CD8-positive, alpha-beta T cell (primary cell): ENCODE measurements at regions of chr13 and their contacts with region 1.

Region 1: GRCh38 chr13:30114571-30115256 is 192.6 kb downstream of the KATNAL1 start:
- DNase-seq: peak; percentile 90 to 97 (median 94)
- ATAC-seq: peak; percentile 92
- H3K4me3 ChIP-seq: peak overlapping the region; percentile 45 to 61
- H3K4me3 Mint-ChIP-seq: peak overlapping the region; percentile 85
- H3K27ac ChIP-seq: no peak overlapping the region
- H3K27ac Mint-ChIP-seq: peak overlapping the region; percentile 92
- H3K4me1 ChIP-seq: peaks cover 15% of the 10 kb centered on the region
- H3K4me1 Mint-ChIP-seq: peaks cover 30% of the 10 kb centered on the region
- H3K27me3 ChIP-seq: no peaks in the 10 kb centered on the region
- H3K27me3 Mint-ChIP-seq: no peaks in the 10 kb centered on the region
- CTCF ChIP-seq: peak; percentile 91

Region 2: DNA sequence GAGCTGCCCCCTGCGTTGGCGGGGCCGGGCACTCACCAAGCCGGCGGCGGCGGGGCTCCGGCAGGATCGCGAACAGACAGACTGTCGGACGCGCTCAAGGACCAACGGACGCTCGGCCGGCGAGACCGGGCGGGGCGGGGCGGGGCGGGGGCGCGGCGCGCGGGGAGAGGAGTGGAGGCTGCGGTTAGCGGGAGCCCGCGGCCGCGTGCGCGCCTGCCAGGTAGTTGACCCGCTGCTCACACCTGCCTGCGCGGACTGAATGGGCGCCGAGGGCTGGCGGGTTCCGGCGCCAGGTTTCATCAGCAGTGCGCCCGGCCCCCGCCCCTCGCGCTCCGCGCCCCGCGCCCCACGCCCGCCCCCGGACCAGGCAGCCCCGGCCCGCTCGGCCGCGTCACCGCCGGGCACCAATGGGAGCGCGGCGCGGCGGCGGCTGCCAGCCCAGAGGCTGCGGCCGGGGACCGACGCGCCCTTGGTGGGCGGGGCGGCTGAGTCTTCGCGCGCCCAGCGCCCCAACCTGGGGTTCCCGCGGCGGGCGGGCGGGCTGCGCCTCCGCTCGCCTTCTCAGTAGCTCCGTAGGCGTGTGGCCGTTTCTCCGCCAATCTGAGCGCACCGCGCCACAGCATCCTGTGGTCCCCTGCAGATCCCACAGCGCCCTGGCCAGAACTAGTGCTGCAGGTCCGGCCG is 519.2 kb before region 1 on chr13 and contains the start of gene SLC7A1:
- CTCF ChIA-PET with region 1: interaction called, 4 read pairs
- POLR2A ChIA-PET with region 1: no interaction called
- intact Hi-C with region 1: loop called (anchors 2 to 10 kb)
- DNase-seq: peak; percentile 67 to 93 (median 79)
- ATAC-seq: peak; percentile 88
- H3K4me3 ChIP-seq: peak within 1 kb of the TSS; percentile 61 to 74
- H3K4me3 Mint-ChIP-seq: peak within 1 kb of the TSS; percentile 90
- H3K27ac ChIP-seq: peak within 1 kb of the TSS; percentile 63 to 73
- H3K27ac Mint-ChIP-seq: peak within 1 kb of the TSS; percentile 85
- H3K4me1 ChIP-seq: peaks cover 15% of the 10 kb centered on the region
- H3K4me1 Mint-ChIP-seq: peaks cover 36% of the 10 kb centered on the region
- H3K27me3 ChIP-seq: no peaks in the 10 kb centered on the region
- H3K27me3 Mint-ChIP-seq: no peaks in the 10 kb centered on the region
- CTCF ChIP-seq: no peak
- total RNA-seq, gene SLC7A1: 15.2 to 18.4 TPM

Region 3: DNA sequence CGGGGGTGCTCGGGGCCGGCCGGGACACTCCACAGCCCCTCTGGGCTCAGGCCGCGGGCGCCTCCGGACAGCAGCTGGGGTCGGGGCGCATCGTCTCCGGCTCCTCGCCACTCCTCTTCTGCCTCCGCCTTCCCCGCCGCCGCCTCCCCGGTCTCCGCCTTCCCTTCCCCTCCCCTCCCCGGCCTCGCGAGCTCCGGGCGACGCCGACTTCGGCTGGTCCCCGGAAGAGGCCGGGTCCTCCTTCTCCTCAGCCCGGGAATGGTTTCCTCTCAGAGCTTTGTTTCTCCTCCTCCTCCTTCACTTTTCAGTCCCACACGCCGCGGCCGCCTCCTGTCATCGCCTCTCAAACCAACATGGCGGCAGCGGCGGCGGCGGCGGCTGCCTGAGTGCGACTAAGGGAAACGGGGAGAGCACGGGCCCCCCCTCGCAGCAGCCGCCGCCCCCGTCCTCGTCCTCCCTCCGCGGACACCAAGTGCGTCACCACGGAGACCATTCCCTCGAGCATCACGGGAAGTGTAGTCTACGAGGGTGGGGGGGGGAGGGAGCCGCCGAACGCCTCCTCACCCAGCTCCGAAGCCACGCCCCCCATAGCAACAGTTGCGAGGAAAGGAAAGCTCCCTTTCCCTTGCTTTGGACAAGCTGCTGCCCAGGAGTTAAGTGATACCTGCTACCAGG is 264.4 kb before region 1 on chr13 and contains the start of gene UBL3:
- CTCF ChIA-PET with region 1: interaction called, 134 read pairs
- POLR2A ChIA-PET with region 1: interaction called, 13 read pairs
- intact Hi-C with region 1: loop called (anchors 1 kb)
- DNase-seq: peak; percentile 89 to 97 (median 94)
- ATAC-seq: peak; percentile 89
- H3K4me3 ChIP-seq: peak within 1 kb of the TSS; percentile 84 to 86
- H3K4me3 Mint-ChIP-seq: peak within 1 kb of the TSS; percentile 93
- H3K27ac ChIP-seq: peak within 1 kb of the TSS; percentile 90 to 96
- H3K27ac Mint-ChIP-seq: peak within 1 kb of the TSS; percentile 99
- H3K4me1 ChIP-seq: peaks cover 13% of the 10 kb centered on the region
- H3K4me1 Mint-ChIP-seq: peaks cover 24% of the 10 kb centered on the region
- H3K27me3 ChIP-seq: no peaks in the 10 kb centered on the region
- H3K27me3 Mint-ChIP-seq: no peaks in the 10 kb centered on the region
- CTCF ChIP-seq: no peak
- total RNA-seq, gene UBL3: 40.0 to 43.1 TPM

Region 4: DNA sequence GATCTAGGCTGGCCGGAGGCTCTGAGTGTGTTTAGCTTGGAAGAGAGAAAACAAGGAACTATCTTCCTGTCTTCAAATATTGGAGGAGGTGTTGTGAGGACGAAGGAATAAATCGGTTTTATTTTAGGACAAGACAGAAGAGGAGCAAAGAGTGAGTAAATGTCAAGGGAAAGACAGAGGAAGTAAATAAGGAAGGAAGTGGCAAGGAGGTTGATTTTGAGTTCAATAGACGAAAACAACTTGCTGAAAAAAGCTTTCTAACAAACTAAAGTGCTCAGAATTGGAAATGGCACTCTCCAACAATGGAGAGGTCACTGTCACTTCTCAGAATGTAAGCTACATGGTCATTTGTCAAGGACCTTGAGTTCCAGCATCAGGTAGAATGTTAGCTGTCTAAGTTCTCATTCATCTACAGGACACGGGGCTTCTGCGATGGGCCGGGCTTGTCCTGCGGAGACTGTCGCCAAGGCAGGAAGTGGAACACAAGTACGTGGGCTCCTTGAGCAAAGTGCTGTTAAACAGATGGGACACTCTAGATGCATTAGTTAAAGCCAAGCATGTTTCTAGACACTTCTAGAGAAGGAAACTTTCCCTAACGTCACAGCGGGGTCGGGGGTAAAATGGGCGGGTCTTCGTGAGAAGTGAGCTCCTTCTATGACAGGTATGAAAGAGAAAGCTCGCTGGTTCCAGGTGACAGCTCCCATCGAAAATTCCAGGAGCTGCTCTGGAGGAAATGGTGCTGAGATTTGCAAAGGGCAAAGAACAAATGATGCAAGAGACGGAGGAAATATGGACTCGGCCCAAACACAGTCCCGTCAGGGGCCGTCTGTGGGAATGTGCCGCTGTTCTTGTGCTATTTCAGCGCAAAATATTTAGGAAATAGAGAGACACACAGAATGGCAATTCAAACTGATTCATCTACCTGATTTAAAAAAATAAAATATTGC is 160.4 kb before region 1 on chr13:
- CTCF ChIA-PET with region 1: interaction called, 11 read pairs
- POLR2A ChIA-PET with region 1: no interaction called
- intact Hi-C with region 1: no loop called
- DNase-seq: peak in 8 of 9 experiments; percentile 33 to 81 (median 58)
- ATAC-seq: peak; percentile 58
- H3K4me3 ChIP-seq: peak overlapping the region; percentile 35 to 46
- H3K4me3 Mint-ChIP-seq: peak overlapping the region; percentile 80
- H3K27ac ChIP-seq: peak overlapping the region; percentile 62 to 69
- H3K27ac Mint-ChIP-seq: peak overlapping the region; percentile 91
- H3K4me1 ChIP-seq: peaks cover 43% of the 10 kb centered on the region
- H3K4me1 Mint-ChIP-seq: peaks cover 54% of the 10 kb centered on the region
- H3K27me3 ChIP-seq: no peaks in the 10 kb centered on the region
- H3K27me3 Mint-ChIP-seq: peaks cover 2% of the 10 kb centered on the region
- CTCF ChIP-seq: no peak

Region 5: DNA sequence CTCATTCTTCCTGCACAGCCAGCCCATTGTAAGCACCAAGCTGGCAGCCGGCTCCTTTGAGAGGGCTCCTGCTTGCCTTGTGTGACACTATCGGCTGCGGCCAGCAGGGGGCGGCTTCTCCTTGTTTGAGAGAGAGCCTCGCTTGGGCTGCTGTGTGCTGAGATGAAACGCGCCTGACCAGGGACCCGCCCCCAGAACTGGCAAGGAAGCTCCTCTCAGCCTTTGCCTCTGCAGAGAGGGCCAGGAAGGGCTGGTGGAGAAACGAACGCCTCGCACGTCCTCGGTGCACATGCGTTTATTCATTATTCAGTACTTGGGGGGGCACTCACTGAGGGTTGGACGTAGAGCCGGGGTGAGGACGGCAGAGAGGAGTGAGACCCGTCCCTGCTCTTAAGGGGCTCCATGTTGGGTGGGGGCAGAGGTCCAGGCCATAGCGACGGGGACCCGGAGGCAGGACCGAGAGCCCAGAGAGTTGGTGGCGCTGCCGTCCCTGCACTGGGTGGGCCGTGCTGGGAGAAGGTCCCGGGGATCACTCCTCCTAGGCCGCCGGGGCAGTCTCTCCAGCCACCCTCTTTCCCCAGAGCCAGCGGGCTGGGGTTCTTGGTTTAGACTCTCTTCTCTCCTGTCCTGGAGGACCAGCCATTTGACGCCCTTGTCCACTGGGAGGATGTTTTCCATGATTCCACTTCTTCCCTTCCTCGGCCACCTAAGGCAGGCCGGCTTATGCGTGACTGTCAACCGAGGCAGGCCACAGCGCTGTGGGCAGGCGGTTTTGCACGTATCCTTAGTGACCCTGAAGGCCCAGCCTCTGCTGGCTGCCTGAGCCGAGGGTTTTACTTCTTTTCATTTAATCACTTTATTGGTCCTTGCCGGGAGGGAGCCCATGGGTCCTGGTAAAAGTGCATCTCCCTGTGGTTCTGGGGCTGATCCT is 18.2 kb after region 1 on chr13:
- CTCF ChIA-PET with region 1: interaction called, 82 read pairs
- POLR2A ChIA-PET with region 1: interaction called, 6 read pairs
- intact Hi-C with region 1: no loop called
- DNase-seq: peak; percentile 92 to 100 (median 97)
- ATAC-seq: peak; percentile 100
- H3K4me3 ChIP-seq: no peak overlapping the region
- H3K4me3 Mint-ChIP-seq: peak overlapping the region; percentile 65
- H3K27ac ChIP-seq: no peak overlapping the region
- H3K27ac Mint-ChIP-seq: peak overlapping the region; percentile 77
- H3K4me1 ChIP-seq: peaks cover 9% of the 10 kb centered on the region
- H3K4me1 Mint-ChIP-seq: peaks cover 12% of the 10 kb centered on the region
- H3K27me3 ChIP-seq: no peaks in the 10 kb centered on the region
- H3K27me3 Mint-ChIP-seq: no peaks in the 10 kb centered on the region
- CTCF ChIP-seq: peak; percentile 79

Region 6: DNA sequence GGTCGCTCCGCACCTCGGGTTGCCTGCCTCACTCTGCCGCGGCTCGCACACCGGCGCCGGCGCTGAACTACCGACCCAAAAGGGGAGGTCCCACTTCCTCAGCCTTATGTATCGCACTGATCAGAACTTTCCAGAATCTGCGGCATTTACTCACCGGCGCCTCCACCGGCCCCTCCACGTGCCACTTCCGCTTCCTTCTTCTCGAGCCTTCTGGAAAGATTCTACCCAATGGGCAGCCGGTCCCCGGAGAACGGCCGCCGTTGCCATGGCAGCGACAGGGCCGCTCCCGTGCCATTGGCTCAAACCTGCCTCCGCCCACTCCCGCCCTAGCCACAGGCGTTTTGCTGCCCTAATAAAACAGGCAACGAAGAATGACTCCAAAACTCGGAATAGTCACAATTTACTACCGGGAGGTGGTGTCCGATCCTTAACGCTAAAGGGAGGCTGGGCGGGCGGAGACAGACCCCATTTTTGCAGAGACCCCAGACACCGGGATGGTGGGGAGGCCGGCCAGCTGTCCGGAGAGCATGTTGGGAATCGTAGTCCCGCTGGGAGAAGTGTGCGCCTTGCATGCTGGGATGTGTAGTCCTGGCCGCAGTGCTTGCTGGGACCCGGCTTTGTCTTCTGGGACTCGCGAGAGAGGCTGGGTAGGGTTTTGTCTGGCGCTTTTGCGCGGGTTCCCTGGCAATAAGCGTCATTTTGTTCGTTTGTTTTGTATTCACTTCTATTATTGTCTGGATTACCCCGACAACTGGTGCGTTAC is 1047.3 kb after region 1 on chr13 and contains the start of gene HSPH1:
- CTCF ChIA-PET with region 1: no interaction called
- POLR2A ChIA-PET with region 1: no interaction called
- intact Hi-C with region 1: loop called in 1 of 2 experiments (anchors 2 kb)
- DNase-seq: peak; percentile 96 to 99 (median 98)
- ATAC-seq: peak; percentile 83
- H3K4me3 ChIP-seq: peak within 1 kb of the TSS; percentile 76 to 95
- H3K4me3 Mint-ChIP-seq: peak within 1 kb of the TSS; percentile 95
- H3K27ac ChIP-seq: peak within 1 kb of the TSS; percentile 98
- H3K27ac Mint-ChIP-seq: peak within 1 kb of the TSS; percentile 98
- H3K4me1 ChIP-seq: peaks cover 25% of the 10 kb centered on the region
- H3K4me1 Mint-ChIP-seq: peaks cover 43% of the 10 kb centered on the region
- H3K27me3 ChIP-seq: no peaks in the 10 kb centered on the region
- H3K27me3 Mint-ChIP-seq: no peaks in the 10 kb centered on the region
- CTCF ChIP-seq: no peak
- total RNA-seq, gene HSPH1: 189 to 199 TPM

Region 7: DNA sequence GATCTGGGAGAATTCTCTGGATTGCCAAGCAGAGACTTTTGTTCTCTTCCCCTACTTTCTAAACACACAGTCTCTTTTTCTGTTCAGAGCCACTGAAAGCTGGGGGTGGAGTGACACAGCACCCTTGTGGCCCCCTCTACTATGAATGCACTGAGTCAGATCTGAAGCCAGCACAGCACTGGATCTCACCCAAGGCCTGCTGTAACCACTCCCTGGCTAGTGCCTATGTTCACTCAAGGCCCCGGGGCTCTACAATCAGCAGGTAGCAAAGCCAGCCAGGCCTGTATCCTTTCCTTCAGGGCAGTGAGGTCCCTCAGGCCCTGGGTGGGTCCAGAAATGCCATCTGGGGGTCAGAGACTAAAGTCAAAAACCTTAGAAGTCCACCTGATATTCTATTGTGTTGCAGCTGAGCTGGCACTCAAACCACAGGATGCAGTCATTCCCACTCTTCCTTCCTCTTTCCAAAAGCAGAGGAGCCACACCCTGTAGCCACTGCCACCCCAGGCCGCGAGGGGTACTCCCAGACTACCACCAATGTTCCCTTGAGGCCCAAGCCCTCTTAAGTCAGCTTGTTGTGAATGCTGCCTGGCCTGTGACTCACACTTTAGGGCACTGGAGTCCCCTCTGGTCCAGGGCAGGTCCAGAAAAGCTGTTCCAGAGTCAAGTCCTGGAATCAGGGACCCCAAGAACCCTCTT is 1514.5 kb after region 1 on chr13:
- CTCF ChIA-PET with region 1: no interaction called
- POLR2A ChIA-PET with region 1: no interaction called
- intact Hi-C with region 1: no loop called
- DNase-seq: no peak
- ATAC-seq: no peak
- H3K4me3 ChIP-seq: no peak overlapping the region
- H3K4me3 Mint-ChIP-seq: no peak overlapping the region
- H3K27ac ChIP-seq: no peak overlapping the region
- H3K27ac Mint-ChIP-seq: no peak overlapping the region
- H3K4me1 ChIP-seq: no peaks in the 10 kb centered on the region
- H3K4me1 Mint-ChIP-seq: no peaks in the 10 kb centered on the region
- H3K27me3 ChIP-seq: no peaks in the 10 kb centered on the region
- H3K27me3 Mint-ChIP-seq: peaks cover 4% of the 10 kb centered on the region
- CTCF ChIP-seq: no peak